ENCODE measurements at regions of chr17 and their contacts with region 1.

Region 1: GRCh38 chr17:11997147-11997846 is at the start of gene ZNF18:
- DNase-seq: peak; percentile 89 to 97 (median 94)
- ATAC-seq: peak; percentile 96 to 97
- H3K4me3 Mint-ChIP-seq: peak within 1 kb of the TSS; percentile 89 to 100 (median 98)
- H3K27ac Mint-ChIP-seq: peak within 1 kb of the TSS; percentile 87 to 99 (median 96)
- H3K4me1 Mint-ChIP-seq: peaks cover 14 to 30% (median 26%) of the 10 kb centered on the region in 4 donors
- H3K27me3 Mint-ChIP-seq: no peaks in the 10 kb centered on the region
- polyA plus RNA-seq, gene ZNF18: 6.8 to 8.9 (median 6.9) TPM

Region 2: DNA sequence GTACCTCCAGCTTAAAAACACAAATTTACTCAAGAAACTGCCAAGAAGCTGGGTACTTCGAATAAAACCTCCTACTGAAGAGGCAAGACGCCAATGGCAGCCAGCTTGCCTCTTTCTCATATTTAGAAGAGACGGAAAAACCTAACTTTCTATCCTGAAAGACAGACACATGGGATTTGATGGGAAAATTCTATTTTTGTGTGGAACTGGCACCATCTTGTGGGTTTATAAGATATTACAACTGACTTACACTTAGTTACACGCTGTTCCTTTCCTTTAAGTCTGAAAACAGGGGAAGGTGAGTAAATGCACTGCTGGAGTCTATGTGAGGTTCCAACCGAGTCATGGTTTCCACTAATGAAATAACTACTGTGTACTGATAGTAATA is 10.4 kb before region 1 on chr17:
- POLR2A ChIA-PET with region 1: no interaction called
- DNase-seq: no peak
- ATAC-seq: no peak
- H3K4me3 Mint-ChIP-seq: no peak overlapping the region
- H3K27ac Mint-ChIP-seq: no peak overlapping the region
- H3K4me1 Mint-ChIP-seq: peaks cover 14 to 34% (median 26%) of the 10 kb centered on the region in 4 donors
- H3K27me3 Mint-ChIP-seq: no peaks in the 10 kb centered on the region

Region 3: GRCh38 chr17:12020642-12021622 is 23.6 kb after region 1 on chr17 and contains the start of gene MAP2K4:
- POLR2A ChIA-PET with region 1: interaction called, 192 read pairs
- DNase-seq: peak; percentile 87 to 97 (median 94)
- ATAC-seq: peak; percentile 91 to 94
- H3K4me3 Mint-ChIP-seq: peak within 1 kb of the TSS; percentile 71 to 90 (median 82)
- H3K27ac Mint-ChIP-seq: peak within 1 kb of the TSS; percentile 40 to 92 (median 86)
- H3K4me1 Mint-ChIP-seq: peaks cover 17 to 52% (median 50%) of the 10 kb centered on the region in 4 donors
- H3K27me3 Mint-ChIP-seq: peaks cover 0 to 1% (median 0%) of the 10 kb centered on the region in 5 donors
- polyA plus RNA-seq, gene MAP2K4: 17.7 to 27.3 (median 19.6) TPM

Region 4: GRCh38 chr17:12027658-12028057 is 30.4 kb after region 1 on chr17:
- POLR2A ChIA-PET with region 1: interaction called, 192 read pairs
- DNase-seq: no peak
- ATAC-seq: no peak
- H3K4me3 Mint-ChIP-seq: peak overlapping the region in 3 of 10 donors; percentile 1 to 28 (median 20)
- H3K27ac Mint-ChIP-seq: no peak overlapping the region
- H3K4me1 Mint-ChIP-seq: peaks cover 36 to 88% (median 83%) of the 10 kb centered on the region in 4 donors
- H3K27me3 Mint-ChIP-seq: no peaks in the 10 kb centered on the region

Measured in naive thymus-derived CD8-positive, alpha-beta T cell (primary cell).